PC-3 (cell line): ENCODE measurements at regions of chr11 and their contacts with region 1.

Region 1: GRCh38 chr11:107457558-107458271 is at the start of gene CWF19L2:
- DNase-seq: peak; percentile 98
- ATAC-seq: peak; percentile 98
- H3K4me3 ChIP-seq: peak within 1 kb of the TSS; percentile 90
- H3K27ac ChIP-seq: no peak within 1 kb of the TSS
- H3K4me1 ChIP-seq: peaks cover 14% of the 10 kb centered on the region
- H3K27me3 ChIP-seq: no peaks in the 10 kb centered on the region
- CTCF ChIP-seq: no peak
- total RNA-seq, gene CWF19L2: 8.6 and 13.0 TPM in 2 replicates

Region 2: GRCh38 chr11:107493117-107493516 is 35.4 kb after region 1 on chr11:
- CTCF ChIA-PET with region 1: no interaction called
- POLR2A ChIA-PET with region 1: no interaction called
- intact Hi-C with region 1: loop called (anchors 1 kb)
- DNase-seq: peak; percentile 97
- ATAC-seq: peak; percentile 96
- H3K4me3 ChIP-seq: no peak overlapping the region
- H3K27ac ChIP-seq: 0 out of 2 replicates have a peak overlapping the region, but pooled peaks have one; percentile 0
- H3K4me1 ChIP-seq: peaks cover 17% of the 10 kb centered on the region
- H3K27me3 ChIP-seq: no peaks in the 10 kb centered on the region
- CTCF ChIP-seq: no peak